Adrenal gland (tissue), 19 donors: ENCODE measurements at regions of chr20 and their contacts with region 1.

Region 1: DNA sequence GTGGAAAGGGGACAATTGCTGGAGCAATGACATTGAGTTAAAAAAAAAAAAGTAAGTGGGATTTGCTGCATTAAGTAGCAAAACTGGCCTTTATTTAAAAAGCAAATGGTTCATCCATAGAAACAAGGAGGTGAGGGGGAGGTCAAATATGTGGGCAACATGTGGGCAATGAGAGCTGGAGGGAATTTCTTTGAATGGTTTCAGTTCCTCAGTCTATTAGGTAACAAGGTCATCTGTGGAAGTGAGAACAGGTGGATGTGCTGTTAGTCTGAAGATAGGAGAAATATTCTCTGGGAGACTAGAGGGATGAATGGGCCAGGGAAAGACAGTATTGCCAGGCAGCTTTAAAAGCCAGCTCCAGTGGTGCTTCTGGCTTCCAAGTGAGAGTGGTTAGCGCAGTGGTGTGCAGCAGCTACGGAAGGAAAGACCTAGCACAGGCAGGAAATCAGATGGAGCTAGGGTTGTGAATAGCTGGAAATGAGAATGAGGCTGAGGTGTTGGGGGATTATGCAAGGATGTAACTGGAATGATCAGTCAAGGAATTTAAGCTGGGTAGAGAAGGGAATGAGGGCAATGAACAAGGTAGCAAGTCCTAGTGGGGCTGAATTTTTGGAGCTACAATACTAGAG is 727.6 kb downstream of the PTPRT start:
- DNase-seq: no peak
- H3K4me3 ChIP-seq: no peak overlapping the region
- H3K27ac ChIP-seq: no peak overlapping the region
- H3K4me1 ChIP-seq: no peaks in the 10 kb centered on the region
- H3K27me3 ChIP-seq: no peaks in the 10 kb centered on the region
- CTCF ChIP-seq: no peak
- POLR2A ChIP-seq: no peak

Region 2: DNA sequence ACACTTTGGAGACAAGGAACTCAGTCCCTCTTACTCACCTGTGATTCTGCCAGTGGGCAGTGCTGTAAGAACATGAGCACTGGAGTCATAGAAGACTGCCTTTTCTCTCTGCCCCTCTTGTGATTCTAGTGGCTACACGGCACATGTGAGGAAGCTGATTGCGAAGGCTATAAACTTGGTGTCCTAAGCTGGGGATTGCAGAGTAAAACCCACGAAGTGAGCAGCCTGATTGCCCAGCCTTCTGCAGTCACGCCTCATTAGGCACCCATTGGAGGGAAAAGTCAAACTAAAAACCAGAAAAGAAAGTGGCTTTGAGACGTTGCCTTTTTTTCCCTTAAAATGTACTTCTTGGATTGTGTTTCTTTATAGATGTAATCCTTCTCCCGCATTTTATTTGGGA is 95.5 kb before region 1 on chr20:
- intact Hi-C with region 1: loop called in 1 of 2 experiments (anchors 10 kb)
- DNase-seq: no peak
- H3K4me3 ChIP-seq: no peak overlapping the region
- H3K27ac ChIP-seq: no peak overlapping the region
- H3K4me1 ChIP-seq: no peaks in the 10 kb centered on the region
- H3K27me3 ChIP-seq: no peaks in the 10 kb centered on the region
- CTCF ChIP-seq: no peak
- POLR2A ChIP-seq: no peak

Region 3: DNA sequence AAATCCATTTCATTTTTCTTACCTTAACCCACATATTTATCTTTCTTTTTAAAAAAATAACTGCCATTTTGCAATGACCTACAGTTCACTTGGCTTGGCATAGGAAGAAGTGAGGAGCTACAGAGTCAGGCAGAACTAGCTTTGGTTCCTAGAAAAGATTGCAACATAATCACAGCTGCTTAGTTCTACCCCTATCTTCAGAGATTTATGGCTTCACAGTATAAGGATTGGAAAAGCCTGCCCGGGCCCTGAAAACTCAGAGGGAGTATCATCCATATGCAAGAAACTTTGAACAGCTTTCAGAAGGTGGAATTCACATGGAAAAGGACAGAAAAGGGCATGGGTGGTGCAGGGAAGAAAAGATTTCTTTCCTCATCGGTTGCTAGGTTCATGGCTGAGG is 69.6 kb before region 1 on chr20:
- intact Hi-C with region 1: loop called in 1 of 2 experiments (anchors 10 kb)
- DNase-seq: peak in 3 of 7 donors; percentile 20 to 27 (median 26)
- H3K4me3 ChIP-seq: no peak overlapping the region
- H3K27ac ChIP-seq: no peak overlapping the region
- H3K4me1 ChIP-seq: no peaks in the 10 kb centered on the region
- H3K27me3 ChIP-seq: no peaks in the 10 kb centered on the region
- CTCF ChIP-seq: no peak
- POLR2A ChIP-seq: no peak